HCT116 (cell line): ENCODE measurements at regions of chr7 and their contacts with region 1.

Region 1: DNA sequence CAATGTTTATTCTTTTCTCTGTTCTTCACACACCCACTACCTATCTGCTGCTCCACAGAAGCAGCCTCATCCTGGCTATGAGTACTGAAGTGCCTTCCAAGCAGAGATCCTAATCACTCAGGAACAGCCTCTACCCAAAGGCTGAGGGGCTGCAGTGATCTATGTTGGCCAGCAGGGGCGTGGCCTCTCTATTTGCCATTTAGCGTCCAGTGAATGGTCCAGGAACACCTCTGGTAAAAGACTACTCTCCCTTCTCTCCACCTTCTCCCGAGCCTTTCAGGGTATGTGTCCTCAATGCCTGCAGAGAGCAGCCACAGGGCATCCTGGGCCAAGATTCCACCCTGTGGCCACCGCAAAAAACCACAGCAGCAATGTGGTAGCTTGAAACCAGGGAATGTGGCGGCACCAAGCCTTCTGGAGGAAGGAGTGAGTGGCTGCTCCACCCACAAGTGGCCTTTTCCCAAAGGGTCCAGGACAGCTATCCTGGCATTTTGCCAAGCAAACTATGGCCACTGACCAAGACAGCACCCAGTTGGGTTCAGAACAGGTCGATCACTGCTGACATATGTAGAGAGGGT is 70.9 kb downstream of the SYPL1 start:
- DNase-seq: peak; percentile 47
- ATAC-seq: peak; percentile 81
- H3K4me3 ChIP-seq: no peak overlapping the region
- H3K27ac ChIP-seq: no peak overlapping the region
- H3K4me1 ChIP-seq: peaks cover 0 to 12% of the 10 kb centered on the region in 2 experiments; a peak in 2 of 4 replicates
- H3K27me3 ChIP-seq: no peaks in the 10 kb centered on the region
- CTCF ChIP-seq: peak; percentile 67 to 94 (median 88); a peak in 5 of 6 replicates
- POLR2A ChIP-seq: no peak
- RAD21 ChIP-seq: peak; percentile 51

Region 2: DNA sequence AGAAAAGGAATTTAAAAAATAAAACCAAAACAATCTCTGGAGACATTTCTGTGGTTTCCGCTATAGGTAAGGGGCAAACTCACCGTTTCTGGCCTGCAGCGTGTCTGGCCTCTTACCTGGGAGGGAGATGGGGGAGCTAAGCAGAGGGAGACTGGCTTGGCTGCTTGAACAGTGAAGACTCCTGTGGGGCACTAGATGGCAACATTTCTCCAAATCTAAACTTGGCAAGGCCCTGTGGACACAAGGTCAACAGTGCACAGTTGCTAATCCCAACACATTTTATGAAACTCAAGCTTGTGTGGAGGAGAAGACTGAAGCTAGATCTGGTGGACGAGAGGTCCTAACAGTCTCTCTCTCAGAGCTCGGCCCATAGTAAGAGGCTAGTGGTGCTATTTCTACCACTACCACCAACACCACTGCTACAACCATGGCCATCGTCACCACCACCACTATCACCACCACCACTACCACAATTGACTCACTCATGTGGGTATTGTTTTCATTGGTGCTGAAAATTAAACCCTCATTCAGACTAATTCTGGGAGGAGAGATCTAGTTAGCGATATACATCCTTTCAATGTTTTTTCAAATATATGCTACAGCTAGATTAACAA is 106.5 kb before region 1 on chr7:
- CTCF ChIA-PET with region 1: interaction called, 5 read pairs
- POLR2A ChIA-PET with region 1: no interaction called
- RAD21 ChIA-PET with region 1: no interaction called
- intact Hi-C with region 1: loop called (anchors 2 kb)
- DNase-seq: peak; percentile 7
- ATAC-seq: peak; percentile 83
- H3K4me3 ChIP-seq: no peak overlapping the region
- H3K27ac ChIP-seq: no peak overlapping the region
- H3K4me1 ChIP-seq: no peaks in the 10 kb centered on the region
- H3K27me3 ChIP-seq: no peaks in the 10 kb centered on the region
- CTCF ChIP-seq: peak; percentile 25 to 33 (median 29); a peak in 4 of 6 replicates
- POLR2A ChIP-seq: no peak
- RAD21 ChIP-seq: peak; percentile 56

Region 3: GRCh38 chr7:106153891-106154449 is 112.7 kb after region 1 on chr7:
- CTCF ChIA-PET with region 1: interaction called, 11 read pairs
- POLR2A ChIA-PET with region 1: no interaction called
- RAD21 ChIA-PET with region 1: no interaction called
- intact Hi-C with region 1: no loop called
- DNase-seq: peak; percentile 57
- ATAC-seq: peak; percentile 100
- H3K4me3 ChIP-seq: no peak overlapping the region
- H3K27ac ChIP-seq: no peak overlapping the region
- H3K4me1 ChIP-seq: peaks cover 0 to 8% of the 10 kb centered on the region in 2 experiments; a peak in 1 of 4 replicates
- H3K27me3 ChIP-seq: 0 out of 2 replicates have a peak, but pooled peaks cover 3% of the 10 kb centered on the region
- CTCF ChIP-seq: peak; percentile 90 to 95 (median 92)
- POLR2A ChIP-seq: no peak
- RAD21 ChIP-seq: peak; percentile 99